ENCODE measurements at regions of chr4 and their contacts with region 1.

Region 1: GRCh38 chr4:24840821-24841587 is 45.6 kb downstream of the SOD3 start:
- DNase-seq: peak; percentile 83
- ATAC-seq: peak; percentile 66
- H3K4me3 ChIP-seq: peak overlapping the region; percentile 30; the same call in 1 of the 2 replicates
- H3K27ac ChIP-seq: peak overlapping the region; percentile 75
- H3K4me1 ChIP-seq: peaks cover 19% of the 10 kb centered on the region
- H3K27me3 ChIP-seq: no peaks in the 10 kb centered on the region
- CTCF ChIP-seq: peak; percentile 23; the same call in 1 of the 2 replicates

Region 2: DNA sequence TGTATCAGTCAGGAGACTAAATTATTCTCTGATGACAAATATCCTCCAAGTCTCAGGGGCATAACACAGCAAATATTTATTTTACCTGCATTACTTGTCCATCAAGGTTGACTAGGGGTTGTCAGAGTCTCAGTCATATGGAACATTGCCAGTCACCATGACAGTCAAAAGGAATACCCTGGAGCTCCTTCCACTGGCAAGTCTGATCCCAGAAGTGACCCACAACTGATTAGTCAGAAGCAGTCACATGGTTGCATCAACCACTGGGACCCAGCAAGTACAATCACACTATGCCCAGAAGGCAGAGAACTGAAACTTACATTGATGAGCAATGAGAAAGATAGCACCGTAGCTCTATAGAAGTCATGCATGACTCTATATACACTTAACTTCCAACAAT is 87.5 kb before region 1 on chr4:
- CTCF ChIA-PET with region 1: no interaction called
- POLR2A ChIA-PET with region 1: no interaction called
- intact Hi-C with region 1: loop called (anchors 5 kb)
- DNase-seq: peak; percentile 98
- ATAC-seq: peak; percentile 90
- H3K4me3 ChIP-seq: no peak overlapping the region
- H3K27ac ChIP-seq: peak overlapping the region; percentile 93
- H3K4me1 ChIP-seq: peaks cover 24% of the 10 kb centered on the region
- H3K27me3 ChIP-seq: no peaks in the 10 kb centered on the region
- CTCF ChIP-seq: no peak

Region 3: GRCh38 chr4:24816797-24817196 is 24.2 kb before region 1 on chr4:
- CTCF ChIA-PET with region 1: no interaction called
- POLR2A ChIA-PET with region 1: no interaction called
- intact Hi-C with region 1: no loop called
- DNase-seq: no peak
- ATAC-seq: no peak
- H3K4me3 ChIP-seq: no peak overlapping the region
- H3K27ac ChIP-seq: no peak overlapping the region
- H3K4me1 ChIP-seq: no peaks in the 10 kb centered on the region
- H3K27me3 ChIP-seq: no peaks in the 10 kb centered on the region
- CTCF ChIP-seq: no peak

Region 4: GRCh38 chr4:24912252-24913118 is 71.5 kb after region 1 on chr4 and contains the start of gene CCDC149:
- CTCF ChIA-PET with region 1: no interaction called
- POLR2A ChIA-PET with region 1: no interaction called
- intact Hi-C with region 1: loop called (anchors 5 kb)
- DNase-seq: peak; percentile 79
- ATAC-seq: peak; percentile 89
- H3K4me3 ChIP-seq: peak within 1 kb of the TSS; percentile 68
- H3K27ac ChIP-seq: peak within 1 kb of the TSS; percentile 50
- H3K4me1 ChIP-seq: peaks cover 11% of the 10 kb centered on the region
- H3K27me3 ChIP-seq: no peaks in the 10 kb centered on the region
- CTCF ChIP-seq: no peak
- total RNA-seq, gene CCDC149: 5.9 and 7.9 TPM in 2 replicates

Region 5: DNA sequence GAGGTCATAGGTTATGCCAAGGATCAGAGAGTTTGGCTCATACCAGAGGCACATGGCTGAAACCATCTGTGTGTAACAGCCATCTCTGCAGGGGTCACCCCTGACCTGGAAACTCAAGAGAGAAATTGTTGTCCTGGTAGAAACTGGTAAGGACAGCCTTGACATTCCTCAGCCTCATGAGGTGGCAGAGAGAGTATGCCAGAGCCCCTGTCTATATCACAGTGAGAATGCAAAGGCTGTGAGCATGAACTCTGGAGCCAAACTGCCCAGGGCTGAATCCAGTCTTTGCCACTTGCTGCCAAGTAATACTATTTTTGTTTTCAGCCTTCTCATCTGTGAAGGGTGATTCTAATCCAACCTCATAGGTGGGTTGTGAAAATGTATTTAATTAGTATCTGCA is 109.0 kb after region 1 on chr4:
- CTCF ChIA-PET with region 1: no interaction called
- POLR2A ChIA-PET with region 1: no interaction called
- intact Hi-C with region 1: no loop called
- DNase-seq: no peak
- ATAC-seq: no peak
- H3K4me3 ChIP-seq: no peak overlapping the region
- H3K27ac ChIP-seq: no peak overlapping the region
- H3K4me1 ChIP-seq: no peaks in the 10 kb centered on the region
- H3K27me3 ChIP-seq: no peaks in the 10 kb centered on the region
- CTCF ChIP-seq: no peak

Region 6: DNA sequence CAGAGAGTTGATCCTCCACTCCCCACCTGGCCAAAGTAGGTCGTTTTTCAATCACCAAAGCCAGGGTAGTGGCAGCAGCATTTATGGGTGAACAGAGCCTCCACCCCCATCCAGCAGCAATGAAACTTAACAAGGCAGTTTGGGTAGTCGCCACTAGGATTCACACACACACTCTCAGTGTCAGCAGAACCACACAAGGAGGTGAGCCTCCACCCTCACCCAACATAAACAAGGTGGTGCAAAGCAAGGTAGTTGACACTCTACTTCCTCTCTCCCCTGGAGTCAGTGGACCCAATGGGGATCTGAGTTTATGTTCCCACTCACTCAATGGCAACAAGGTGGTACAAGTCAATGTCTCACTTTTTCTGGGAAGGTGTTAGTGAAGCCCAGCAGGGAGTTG is 122.3 kb after region 1 on chr4:
- CTCF ChIA-PET with region 1: no interaction called
- POLR2A ChIA-PET with region 1: no interaction called
- intact Hi-C with region 1: no loop called
- DNase-seq: no peak
- ATAC-seq: no peak
- H3K4me3 ChIP-seq: no peak overlapping the region
- H3K27ac ChIP-seq: no peak overlapping the region
- H3K4me1 ChIP-seq: no peaks in the 10 kb centered on the region
- H3K27me3 ChIP-seq: no peaks in the 10 kb centered on the region
- CTCF ChIP-seq: no peak

Region 7: GRCh38 chr4:24973733-24974601 is 133.0 kb after region 1 on chr4:
- CTCF ChIA-PET with region 1: no interaction called
- POLR2A ChIA-PET with region 1: no interaction called
- intact Hi-C with region 1: loop called (anchors 5 kb)
- DNase-seq: peak; percentile 51
- ATAC-seq: peak; percentile 67
- H3K4me3 ChIP-seq: peak overlapping the region; percentile 44; the same call in 1 of the 2 replicates
- H3K27ac ChIP-seq: peak overlapping the region; percentile 81
- H3K4me1 ChIP-seq: peaks cover 28% of the 10 kb centered on the region
- H3K27me3 ChIP-seq: no peaks in the 10 kb centered on the region
- CTCF ChIP-seq: no peak

Measured in PC-3 (cell line).